Mammary epithelial cell (primary cell): ENCODE measurements at regions of chr1 and their contacts with region 1.

Region 1: DNA sequence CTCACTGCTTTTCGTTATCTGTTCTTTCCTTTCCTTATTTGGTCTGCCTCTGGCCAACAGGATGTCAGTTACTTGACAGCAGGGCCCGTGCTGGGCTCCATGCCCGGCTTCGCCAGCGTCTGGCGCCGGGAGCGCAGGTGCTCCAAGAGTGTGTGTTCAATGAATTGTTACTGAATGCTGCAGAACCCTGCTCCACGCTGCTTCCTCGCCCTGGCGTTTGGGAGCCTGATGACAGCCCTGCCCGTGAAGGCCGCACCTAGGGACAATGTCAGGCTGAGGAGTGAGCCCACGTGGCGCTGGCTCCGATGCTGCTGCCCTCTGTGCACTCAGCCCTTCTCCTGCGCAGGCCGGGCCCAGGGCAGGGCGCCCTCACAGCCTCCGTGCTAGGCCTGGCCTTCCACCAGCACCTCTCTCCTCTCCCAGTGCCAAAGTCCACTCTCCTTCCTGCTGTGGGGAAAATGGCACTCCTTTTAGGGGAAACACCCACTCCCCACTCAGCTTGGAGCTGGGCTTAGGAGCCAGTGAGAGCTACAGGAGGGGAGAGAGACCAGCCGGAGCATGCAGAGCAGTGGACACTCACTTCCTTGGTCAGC is 51.4 kb downstream of the ACBD3 start:
- DNase-seq: no peak
- H3K4me3 ChIP-seq: no peak overlapping the region
- H3K27ac ChIP-seq: no peak overlapping the region
- H3K4me1 ChIP-seq: peaks cover 10% of the 10 kb centered on the region
- H3K27me3 ChIP-seq: no peaks in the 10 kb centered on the region
- CTCF ChIP-seq: no peak

Region 2: DNA sequence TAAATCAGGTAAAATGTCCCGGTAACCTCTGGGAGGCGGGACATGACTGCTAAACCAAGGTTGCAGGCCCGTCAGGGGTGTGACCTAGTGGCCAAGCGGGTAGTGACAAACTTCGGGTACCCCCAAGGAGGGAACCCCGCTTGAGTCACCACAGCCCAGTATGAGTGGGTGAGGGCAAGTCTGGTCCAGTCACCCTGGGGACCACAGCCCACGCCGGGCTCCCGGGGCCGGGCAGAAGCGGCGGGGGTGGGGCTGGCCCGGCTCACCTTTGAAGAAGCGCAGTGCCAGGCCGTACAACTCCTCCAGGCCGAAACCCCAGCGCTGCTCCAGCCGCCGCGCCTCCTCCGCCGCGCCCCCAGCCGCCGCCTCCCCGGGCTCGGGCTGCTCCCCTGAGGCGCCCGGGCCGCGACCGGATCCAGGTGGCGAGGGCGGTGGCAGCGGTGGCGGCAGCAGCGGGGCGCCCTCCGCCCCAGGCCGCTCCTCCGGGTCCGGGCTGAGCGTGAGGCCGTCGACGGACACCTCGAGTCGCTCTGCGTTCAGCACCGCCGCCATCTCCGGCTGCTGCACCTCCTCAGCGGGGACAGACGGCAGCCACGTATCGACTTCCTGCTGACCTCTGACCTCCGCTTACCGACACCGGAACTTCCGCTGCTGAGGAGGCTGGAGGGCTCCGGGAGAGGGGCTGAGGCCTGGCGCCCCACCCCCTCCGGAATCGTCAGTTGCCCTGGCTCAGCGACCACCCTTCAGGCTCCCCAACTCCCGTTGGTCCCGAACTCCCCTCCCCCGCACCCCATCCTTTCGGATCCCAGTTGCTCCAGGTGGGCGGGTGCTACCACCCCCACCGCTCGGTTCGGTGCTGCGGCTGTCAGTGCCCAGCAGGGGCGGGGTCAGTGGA is 51.2 kb after region 1 on chr1 and contains the start of gene ACBD3:
- CTCF ChIA-PET with region 1: no interaction called
- dilution Hi-C with region 1: loop called (anchors 5 kb)
- in situ Hi-C with region 1: loop called in 1 of 2 experiments (anchors 10 kb)
- intact Hi-C with region 1: no loop called
- DNase-seq: peak; percentile 75
- H3K4me3 ChIP-seq: peak within 1 kb of the TSS; percentile 84 to 88 (median 85)
- H3K27ac ChIP-seq: peak within 1 kb of the TSS; percentile 63
- H3K4me1 ChIP-seq: peaks cover 23% of the 10 kb centered on the region
- H3K27me3 ChIP-seq: no peaks in the 10 kb centered on the region
- CTCF ChIP-seq: peak in 1 of 2 donors; percentile 10
- total RNA-seq, gene ACBD3: 50.3 to 53.2 TPM

Region 3: DNA sequence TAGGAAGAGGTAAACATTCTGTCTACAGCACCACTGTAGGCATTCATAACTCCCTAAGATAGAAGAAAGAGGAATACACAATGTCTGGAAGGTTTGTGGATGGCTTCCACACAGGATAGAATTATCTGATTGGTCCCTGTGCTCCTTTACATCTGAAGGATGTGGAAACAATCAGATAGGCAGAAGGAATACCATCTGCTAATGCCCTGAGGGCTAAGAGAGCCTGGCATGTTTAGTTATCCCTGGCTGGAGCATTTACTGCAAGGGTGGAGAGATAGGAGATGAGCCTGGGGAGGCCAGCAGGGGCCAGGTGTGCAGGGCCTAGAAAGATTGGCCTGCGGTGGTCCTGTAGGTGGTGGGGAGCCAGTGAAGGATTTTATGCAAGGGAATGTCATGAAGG is 60.0 kb after region 1 on chr1:
- CTCF ChIA-PET with region 1: no interaction called
- dilution Hi-C with region 1: no loop called
- in situ Hi-C with region 1: loop called in 1 of 2 experiments (anchors 5 kb)
- intact Hi-C with region 1: no loop called
- DNase-seq: no peak
- H3K4me3 ChIP-seq: no peak overlapping the region
- H3K27ac ChIP-seq: no peak overlapping the region
- H3K4me1 ChIP-seq: no peaks in the 10 kb centered on the region
- H3K27me3 ChIP-seq: no peaks in the 10 kb centered on the region
- CTCF ChIP-seq: no peak